Left cardiac atrium (tissue), 4 donors: ENCODE measurements at regions of chr10 and their contacts with region 1.

Region 1: GRCh38 chr10:132023092-132023811 is 41.5 kb upstream of the BNIP3 start:
- DNase-seq: peak; percentile 87
- ATAC-seq: peak; percentile 93 to 95

Region 2: DNA sequence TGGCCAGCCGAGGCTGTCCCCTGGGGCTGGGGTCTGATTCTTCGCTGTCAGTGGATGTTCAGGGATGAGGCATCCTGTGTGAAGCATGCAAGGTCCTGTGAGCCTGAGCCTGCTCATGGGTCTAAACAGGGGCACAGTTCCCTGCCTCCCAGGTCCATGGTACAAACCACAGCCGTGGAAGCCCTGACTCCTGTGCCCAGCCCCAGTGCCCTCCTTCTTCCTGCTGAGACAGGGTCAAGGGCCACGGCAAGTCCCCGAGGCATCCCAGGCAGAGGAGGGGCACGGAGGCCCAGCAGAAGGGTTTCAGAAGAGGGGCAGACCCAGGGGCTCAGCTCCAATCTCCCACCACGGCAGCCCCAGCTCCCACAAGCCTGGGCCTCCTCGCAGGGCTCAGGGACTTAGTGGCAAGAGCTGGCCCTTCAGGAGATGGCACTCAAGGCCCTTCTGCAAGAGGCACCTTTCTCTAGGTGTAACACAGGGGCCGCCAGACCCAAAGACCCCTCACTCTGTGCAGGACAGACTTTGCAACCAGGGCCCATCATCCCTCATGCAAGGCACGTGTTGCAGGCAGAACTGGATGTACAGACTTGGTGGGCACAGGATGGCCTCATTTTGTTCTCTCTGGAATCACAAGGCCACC is 960.5 kb before region 1 on chr10:
- intact Hi-C with region 1: no loop called
- DNase-seq: no peak
- ATAC-seq: no peak

Region 3: DNA sequence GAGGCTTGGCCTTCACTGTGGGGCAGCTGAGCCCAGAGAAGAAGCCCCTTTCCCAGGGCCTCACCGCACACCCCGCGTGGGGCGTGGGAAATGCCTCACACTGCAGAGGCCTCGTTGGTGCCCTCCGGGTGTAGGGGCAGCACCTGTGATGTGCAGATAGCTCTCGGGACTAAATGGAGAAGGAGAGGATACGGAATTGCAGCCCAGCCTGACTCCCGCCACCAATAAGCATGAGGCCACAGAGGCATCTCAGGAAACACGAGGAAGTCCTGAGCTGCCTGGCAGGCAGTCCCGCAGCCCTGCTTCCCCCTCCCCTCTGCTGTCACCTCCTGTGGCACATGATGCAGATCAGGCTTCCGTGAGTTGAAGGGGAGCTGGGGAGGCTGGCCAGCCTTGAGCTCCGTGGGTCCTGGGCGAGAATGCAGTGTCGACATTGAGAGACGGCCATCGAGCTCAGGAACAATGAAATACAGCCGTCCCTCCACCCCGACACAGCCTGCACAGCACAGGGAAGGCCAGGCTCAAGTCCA is 182.1 kb before region 1 on chr10:
- intact Hi-C with region 1: no loop called
- DNase-seq: no peak
- ATAC-seq: no peak

Region 4: DNA sequence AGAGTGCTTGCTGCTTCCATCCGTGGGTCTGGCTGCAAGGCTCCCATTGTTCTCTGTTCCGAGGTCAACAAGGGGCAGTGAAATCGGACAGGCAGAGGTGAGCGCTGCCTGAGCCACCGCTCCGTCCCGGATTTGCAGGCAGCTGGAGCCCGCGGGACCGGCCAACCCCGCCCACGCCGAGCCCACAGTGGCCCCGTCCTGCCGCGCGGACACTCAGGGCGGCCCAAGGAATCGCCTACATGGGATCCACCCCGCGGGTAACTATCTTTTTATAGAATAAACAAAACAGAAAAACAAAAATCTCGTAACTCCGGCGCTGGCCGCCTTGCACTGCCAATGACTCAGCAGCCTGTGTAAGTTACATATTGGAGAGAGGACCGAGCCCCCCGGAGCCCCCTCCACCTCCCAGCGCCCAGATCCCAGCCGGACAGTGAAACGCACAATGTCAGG is 43.4 kb before region 1 on chr10:
- intact Hi-C with region 1: loop called in 1 of 2 experiments (anchors 5 kb)
- DNase-seq: peak; percentile 64
- ATAC-seq: peak in 1 of 2 donors; percentile 25